Gastrocnemius medialis (tissue), 4 donors: ENCODE measurements at regions of chr17 and their contacts with region 1.

Region 1: GRCh38 chr17:10705727-10706126 is 8.3 kb downstream of the ADPRM start:
- DNase-seq: no peak
- ATAC-seq: no peak
- H3K4me3 ChIP-seq: no peak overlapping the region
- H3K27ac ChIP-seq: no peak overlapping the region
- H3K4me1 ChIP-seq: peaks cover 17 to 20% of the 10 kb centered on the region in 2 donors
- H3K27me3 ChIP-seq: no peaks in the 10 kb centered on the region
- CTCF ChIP-seq: no peak
- POLR2A ChIP-seq: no peak

Region 2: DNA sequence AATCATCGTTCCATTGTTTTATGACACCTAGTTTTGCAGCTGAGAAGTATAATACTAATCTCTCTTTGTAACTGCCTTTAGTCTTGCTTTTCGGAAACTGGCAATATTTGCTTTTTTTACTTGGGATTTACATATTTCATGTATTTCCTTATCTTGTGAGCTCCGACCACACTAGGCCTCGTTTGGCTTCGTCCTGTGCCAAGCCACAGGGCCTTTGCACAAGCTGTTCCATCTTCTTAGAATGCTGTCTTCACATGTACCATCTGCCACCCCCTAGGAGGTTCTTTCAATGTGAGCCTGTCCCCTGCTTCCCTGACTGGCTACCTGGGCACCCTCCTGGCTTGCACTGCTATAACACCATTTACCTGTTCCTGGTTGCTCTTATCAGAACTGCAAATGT is 612.5 kb after region 1 on chr17:
- in situ Hi-C with region 1: loop called in 1 of 4 experiments (anchors 5 kb)
- intact Hi-C with region 1: loop called (anchors 5 kb)
- DNase-seq: no peak
- ATAC-seq: no peak
- H3K4me3 ChIP-seq: no peak overlapping the region
- H3K27ac ChIP-seq: no peak overlapping the region
- H3K4me1 ChIP-seq: no peaks in the 10 kb centered on the region
- H3K27me3 ChIP-seq: no peaks in the 10 kb centered on the region
- CTCF ChIP-seq: no peak
- POLR2A ChIP-seq: no peak